Heart left ventricle (tissue), 16 donors: ENCODE measurements at regions of chr13 and their contacts with region 1.

Region 1: DNA sequence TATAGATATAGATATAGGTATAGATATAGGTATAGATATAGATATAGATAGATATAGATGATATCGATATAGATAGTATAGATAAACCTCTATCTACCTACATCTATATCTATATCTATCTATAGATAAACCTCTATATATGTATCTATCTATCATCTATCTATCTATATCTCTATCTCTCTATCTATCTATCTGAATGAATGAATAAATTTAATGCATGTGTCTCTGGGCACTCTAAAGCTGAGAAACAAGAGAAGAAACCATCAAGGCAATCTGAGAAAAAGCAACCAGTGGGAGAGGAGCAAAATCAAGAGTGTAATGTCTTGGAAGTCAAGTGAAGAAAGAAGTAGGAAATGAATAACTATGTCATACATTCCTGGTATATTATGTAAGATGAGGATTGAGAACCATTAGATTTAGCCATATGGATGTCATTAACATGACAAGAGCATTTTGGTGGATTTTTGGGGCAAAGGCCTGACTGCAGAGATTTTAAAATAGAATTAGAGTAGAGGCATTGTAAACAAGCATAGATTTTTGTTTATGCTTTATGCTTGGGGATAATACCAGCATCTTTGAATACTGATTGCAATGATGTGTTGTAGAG is 1262.7 kb upstream of the MIR17HG start:
- DNase-seq: no peak
- ATAC-seq: no peak
- H3K4me3 ChIP-seq: no peak overlapping the region
- H3K27ac ChIP-seq: no peak overlapping the region
- H3K4me1 ChIP-seq: no peaks in the 10 kb centered on the region
- H3K27me3 ChIP-seq: no peaks in the 10 kb centered on the region
- CTCF ChIP-seq: no peak
- POLR2A ChIP-seq: no peak

Region 2: GRCh38 chr13:90008707-90009149 is 76.1 kb before region 1 on chr13:
- intact Hi-C with region 1: no loop called
- DNase-seq: no peak
- ATAC-seq: no peak
- H3K4me3 ChIP-seq: no peak overlapping the region
- H3K27ac ChIP-seq: no peak overlapping the region
- H3K4me1 ChIP-seq: no peaks in the 10 kb centered on the region
- H3K27me3 ChIP-seq: no peaks in the 10 kb centered on the region
- CTCF ChIP-seq: no peak
- POLR2A ChIP-seq: no peak

Region 3: DNA sequence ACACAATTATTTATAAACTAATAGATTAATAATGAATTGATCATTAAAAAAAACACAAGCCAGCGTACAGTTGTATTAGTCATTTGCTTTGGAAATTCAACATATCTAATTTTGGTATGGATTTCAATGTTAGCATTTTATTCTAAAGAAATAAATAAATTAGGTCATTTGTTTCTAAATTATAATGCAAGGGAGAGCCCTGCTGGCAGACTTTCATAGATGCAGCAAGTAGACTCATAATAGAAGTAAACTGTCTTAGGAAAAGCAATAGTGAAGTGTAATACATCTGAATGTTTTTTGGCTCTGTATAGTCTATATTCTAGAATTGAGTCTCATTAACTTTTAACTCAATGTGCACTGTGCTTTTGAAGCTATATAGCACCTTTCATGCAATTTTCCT is 280.3 kb after region 1 on chr13:
- intact Hi-C with region 1: loop called in 1 of 10 experiments (anchors 10 kb)
- DNase-seq: no peak
- ATAC-seq: no peak
- H3K4me3 ChIP-seq: no peak overlapping the region
- H3K27ac ChIP-seq: no peak overlapping the region
- H3K4me1 ChIP-seq: no peaks in the 10 kb centered on the region
- H3K27me3 ChIP-seq: no peaks in the 10 kb centered on the region
- CTCF ChIP-seq: peak in 7 of 12 donors; percentile 29 to 43 (median 36)
- POLR2A ChIP-seq: no peak

Region 4: GRCh38 chr13:90867336-90867683 is 782.5 kb after region 1 on chr13:
- intact Hi-C with region 1: loop called in 1 of 10 experiments (anchors 5 kb)
- DNase-seq: peak; percentile 36 to 62 (median 42)
- ATAC-seq: peak; percentile 58 to 84 (median 80)
- H3K4me3 ChIP-seq: no peak overlapping the region
- H3K27ac ChIP-seq: no peak overlapping the region
- H3K4me1 ChIP-seq: no peaks in the 10 kb centered on the region
- H3K27me3 ChIP-seq: no peaks in the 10 kb centered on the region
- CTCF ChIP-seq: peak; percentile 28 to 66 (median 55)
- POLR2A ChIP-seq: no peak